ENCODE measurements at regions of chr20 and their contacts with region 1.

Region 1: DNA sequence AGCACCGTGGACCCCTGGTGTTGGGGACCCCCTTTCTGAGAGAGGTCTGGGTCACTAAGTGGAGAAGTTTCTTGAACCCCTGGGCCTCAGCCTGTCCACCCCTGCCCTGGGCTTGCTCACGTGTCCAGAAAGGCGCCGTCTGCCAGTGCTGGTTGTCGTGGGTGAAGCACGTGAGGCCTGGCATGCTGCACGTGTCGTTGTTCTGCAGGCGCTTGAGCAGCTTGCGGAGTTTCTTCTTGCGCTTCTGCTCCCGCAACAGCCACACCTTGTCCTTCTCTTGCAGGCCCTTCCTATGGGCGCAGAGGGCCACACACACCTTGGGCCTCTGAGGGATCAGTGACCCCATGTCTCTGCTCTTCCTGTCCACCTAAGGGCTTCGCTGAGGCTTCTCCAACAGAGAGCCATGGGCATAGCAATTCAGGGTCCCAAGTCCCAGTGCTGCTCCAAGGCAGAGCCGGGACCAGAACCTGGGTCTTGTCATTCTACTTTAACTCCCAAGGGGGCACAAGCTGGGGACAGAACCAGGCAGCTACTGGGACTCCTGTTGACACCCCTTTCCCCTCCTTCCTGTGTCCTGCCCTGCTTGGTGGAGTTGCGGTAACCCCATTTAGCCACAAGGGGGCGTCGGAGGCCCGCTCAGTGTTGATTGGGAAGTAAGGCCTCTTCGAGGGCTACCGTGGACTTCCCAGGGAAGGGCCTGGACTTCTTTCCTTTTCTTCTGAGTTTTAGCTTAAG is 121.8 kb downstream of the SULF2 start:
- DNase-seq: no peak
- H3K4me3 ChIP-seq: no peak overlapping the region
- H3K27ac ChIP-seq: peak overlapping the region in 2 of 4 donors; percentile 12 to 31
- H3K4me1 ChIP-seq: peaks cover 12 to 34% (median 18%) of the 10 kb centered on the region in 4 donors
- H3K27me3 ChIP-seq: no peaks in the 10 kb centered on the region
- CTCF ChIP-seq: peak; percentile 95 to 98 (median 96)
- EP300 ChIP-seq: no peak
- POLR2A ChIP-seq: no peak

Region 2: GRCh38 chr20:47043086-47043485 is 620.4 kb before region 1 on chr20:
- intact Hi-C with region 1: no loop called
- DNase-seq: no peak
- H3K4me3 ChIP-seq: no peak overlapping the region
- H3K27ac ChIP-seq: no peak overlapping the region
- H3K4me1 ChIP-seq: no peaks in the 10 kb centered on the region
- H3K27me3 ChIP-seq: no peaks in the 10 kb centered on the region
- CTCF ChIP-seq: no peak
- EP300 ChIP-seq: no peak
- POLR2A ChIP-seq: no peak

Region 3: DNA sequence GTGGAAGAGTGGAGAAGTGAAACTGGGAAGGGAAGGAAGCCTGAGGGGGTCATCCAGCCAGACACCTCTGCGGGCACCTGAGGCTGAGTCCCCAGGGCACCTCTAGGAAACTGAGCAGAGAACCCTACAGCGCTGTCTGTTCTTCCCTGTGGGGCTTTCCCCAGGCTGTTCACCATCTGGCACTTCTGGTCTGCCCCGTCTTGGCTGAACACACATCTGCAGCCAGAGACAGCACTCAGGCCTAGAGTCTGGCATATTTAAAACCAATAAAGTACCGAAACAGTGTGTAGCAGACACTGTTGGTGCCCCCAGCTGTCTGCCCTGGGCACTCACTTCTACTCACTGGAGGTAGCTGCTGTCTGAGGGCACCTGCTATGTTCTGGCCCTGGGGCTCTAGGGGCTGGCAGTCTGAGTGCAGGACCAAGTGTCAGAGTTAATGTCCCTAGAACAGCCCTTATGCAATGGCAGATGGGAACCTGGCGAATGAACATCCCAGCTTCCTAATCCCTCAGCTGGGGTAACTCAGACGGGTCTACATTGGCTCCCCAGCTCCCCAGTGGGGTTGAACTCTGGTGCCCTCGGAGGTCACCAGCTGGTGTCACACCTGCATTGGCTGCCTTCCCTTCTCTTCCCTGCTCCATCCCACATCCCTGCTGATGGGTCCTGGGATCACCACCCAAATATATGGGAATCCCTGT is 1248.7 kb after region 1 on chr20:
- intact Hi-C with region 1: loop called (anchors 10 kb)
- DNase-seq: no peak
- H3K4me3 ChIP-seq: no peak overlapping the region
- H3K27ac ChIP-seq: no peak overlapping the region
- H3K4me1 ChIP-seq: no peaks in the 10 kb centered on the region
- H3K27me3 ChIP-seq: peaks cover 0 to 3% (median 0%) of the 10 kb centered on the region in 4 donors
- CTCF ChIP-seq: no peak
- EP300 ChIP-seq: no peak
- POLR2A ChIP-seq: no peak

Measured in esophagus muscularis mucosa (tissue), 4 donors.